GM23248 (cell line): ENCODE measurements at regions of chr18 and their contacts with region 1.

Region 1: DNA sequence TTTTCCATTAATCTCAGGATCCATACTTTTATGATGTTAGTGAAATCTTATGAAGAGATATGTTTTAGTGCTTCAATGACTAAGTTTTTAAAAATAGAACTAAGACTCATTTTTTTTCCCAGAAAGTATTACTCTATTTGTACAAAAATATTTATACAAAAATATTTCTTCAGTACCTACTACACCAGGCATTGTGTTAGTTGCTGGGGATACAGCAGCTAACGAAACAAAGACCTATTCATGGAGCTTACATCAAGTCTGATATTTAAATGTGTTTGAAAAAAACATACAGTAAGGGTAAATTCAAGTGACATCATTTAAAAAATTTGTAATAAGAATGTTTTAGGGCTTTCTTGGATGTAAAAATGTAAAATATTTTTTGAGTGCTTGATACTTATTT is 11.6 kb downstream of the VAPA start:
- DNase-seq: peak; percentile 54
- H3K4me3 ChIP-seq: no peak overlapping the region; the same call in 1 of the 2 replicates
- H3K27ac ChIP-seq: peak overlapping the region; percentile 45
- H3K4me1 ChIP-seq: peaks cover 56% of the 10 kb centered on the region
- H3K27me3 ChIP-seq: no peaks in the 10 kb centered on the region

Region 2: DNA sequence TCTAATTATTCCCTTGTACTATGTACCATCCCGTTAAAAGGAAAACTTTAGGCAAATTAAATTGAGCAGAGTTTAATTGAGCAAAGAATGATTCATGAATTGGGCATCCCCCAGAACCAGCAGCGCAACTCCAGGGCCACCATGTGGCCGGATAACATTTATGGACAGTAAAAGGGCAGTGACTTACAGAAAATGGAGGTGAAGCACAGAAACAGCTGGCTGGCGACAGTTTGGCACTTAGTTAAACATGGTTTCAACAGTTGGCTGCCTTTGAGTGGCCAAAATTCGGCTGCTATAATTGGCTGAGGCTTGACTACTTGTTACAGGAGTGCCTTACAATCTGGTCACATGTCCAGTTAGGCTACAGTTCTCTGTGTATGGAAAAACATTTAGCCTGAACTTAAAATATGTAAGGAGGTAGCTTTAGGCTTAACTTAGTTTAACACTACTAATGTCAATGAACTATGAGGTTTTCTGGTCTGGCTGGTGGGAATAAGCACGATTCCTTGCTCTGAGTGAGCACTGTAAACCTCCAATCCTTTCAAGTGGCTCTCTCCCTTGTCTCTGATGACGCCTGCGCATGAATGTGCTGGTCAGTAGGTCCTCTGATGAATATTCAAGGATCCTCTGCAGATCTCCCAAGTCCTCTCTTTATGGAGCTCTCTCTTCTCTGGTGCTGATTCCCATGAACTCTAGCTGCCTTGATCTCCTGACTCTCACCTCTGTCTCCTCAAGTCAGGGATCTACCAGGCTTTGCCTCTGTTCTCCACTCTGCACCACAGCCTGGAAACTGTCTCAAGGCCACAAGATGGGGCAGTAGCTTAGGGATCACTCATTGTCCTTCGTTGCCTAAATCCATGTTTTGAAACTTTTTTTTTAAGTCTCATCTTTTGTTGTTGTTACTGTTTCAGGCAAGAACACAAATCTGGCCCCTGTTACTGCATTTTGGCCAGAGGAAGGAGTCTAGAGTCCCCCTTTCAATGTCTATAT is 241.7 kb before region 1 on chr18:
- in situ Hi-C with region 1: loop called (anchors 25 kb)
- DNase-seq: peak; percentile 89
- H3K4me3 ChIP-seq: peak overlapping the region; percentile 57
- H3K27ac ChIP-seq: peak overlapping the region; percentile 91
- H3K4me1 ChIP-seq: peaks cover 25% of the 10 kb centered on the region
- H3K27me3 ChIP-seq: no peaks in the 10 kb centered on the region

Region 3: GRCh38 chr18:10057894-10058791 is 132.8 kb after region 1 on chr18:
- in situ Hi-C with region 1: no loop called
- DNase-seq: peak; percentile 89
- H3K4me3 ChIP-seq: peak overlapping the region; percentile 38
- H3K27ac ChIP-seq: peak overlapping the region; percentile 98
- H3K4me1 ChIP-seq: peaks cover 30% of the 10 kb centered on the region
- H3K27me3 ChIP-seq: no peaks in the 10 kb centered on the region

Region 4: DNA sequence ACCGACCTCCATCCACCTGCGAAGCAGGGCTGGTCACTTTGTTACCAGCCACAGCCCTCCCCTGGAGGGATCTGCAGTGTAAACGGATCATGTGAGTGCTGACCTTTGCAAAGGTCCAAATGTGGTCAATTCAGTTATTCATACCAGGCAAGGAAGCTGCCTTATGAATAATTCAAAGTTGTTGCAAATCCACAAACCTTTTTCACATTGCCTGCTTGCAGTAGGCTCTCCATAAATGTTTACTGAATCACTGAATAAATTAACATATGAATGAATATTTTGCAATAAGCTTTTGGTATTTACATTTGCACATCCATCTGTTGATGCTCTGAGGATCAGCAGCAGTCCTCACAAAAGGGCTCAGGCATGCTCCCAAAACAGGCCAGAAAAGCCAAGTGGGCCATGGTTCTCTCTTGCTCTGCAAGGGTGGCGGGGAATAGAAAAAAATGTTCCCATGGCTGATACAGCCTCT is 145.2 kb after region 1 on chr18:
- in situ Hi-C with region 1: no loop called
- DNase-seq: peak; percentile 23
- H3K4me3 ChIP-seq: no peak overlapping the region
- H3K27ac ChIP-seq: no peak overlapping the region
- H3K4me1 ChIP-seq: 0 out of 2 replicates have a peak, but pooled peaks cover 6% of the 10 kb centered on the region
- H3K27me3 ChIP-seq: peaks cover 4% of the 10 kb centered on the region; the same call in 1 of the 2 replicates